Gastrocnemius medialis (tissue), 4 donors: ENCODE measurements at regions of chr6 and their contacts with region 1.

Region 1: GRCh38 chr6:118283766-118284165 is 264.3 kb upstream of the PLN start:
- DNase-seq: peak; percentile 36 to 41
- ATAC-seq: peak; percentile 75 to 84
- H3K4me3 ChIP-seq: peak overlapping the region in 2 of 4 donors; percentile 9 to 31
- H3K27ac ChIP-seq: peak overlapping the region in 1 of 4 donors; percentile 12
- H3K4me1 ChIP-seq: peaks cover 7 to 19% of the 10 kb centered on the region in 2 donors
- H3K27me3 ChIP-seq: no peaks in the 10 kb centered on the region
- CTCF ChIP-seq: peak; percentile 71 to 82 (median 76)
- POLR2A ChIP-seq: no peak

Region 2: DNA sequence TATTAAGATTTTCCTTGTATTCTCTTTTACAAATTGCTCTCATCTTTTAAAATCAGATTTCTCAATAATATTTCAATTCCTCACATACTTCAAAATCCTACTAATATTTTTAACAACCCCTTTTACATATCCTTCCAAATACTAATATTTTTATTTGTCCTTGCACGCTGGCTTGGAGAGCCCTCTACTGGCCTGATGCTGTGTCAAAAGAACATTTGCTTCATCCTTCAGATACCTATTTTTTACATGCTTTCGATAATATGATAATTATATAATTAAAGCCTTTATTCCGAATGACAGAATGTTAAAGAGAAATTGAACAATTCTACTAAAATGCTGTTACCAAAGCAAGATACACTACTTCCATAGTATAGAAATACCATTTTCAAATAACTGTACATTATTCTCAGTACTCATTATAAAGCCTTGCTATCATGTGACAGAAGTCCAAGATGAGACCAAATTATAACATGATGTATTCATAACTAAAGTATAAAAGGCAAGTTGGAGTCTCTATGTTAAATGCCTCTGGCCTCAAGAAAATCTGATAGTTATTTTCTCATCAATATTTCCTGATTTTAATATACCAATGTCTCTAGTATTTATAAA is 225.3 kb after region 1 on chr6:
- in situ Hi-C with region 1: loop called in 3 of 4 experiments (anchors 5 to 25 kb)
- intact Hi-C with region 1: loop called (anchors 1 kb)
- DNase-seq: no peak
- ATAC-seq: no peak
- H3K4me3 ChIP-seq: no peak overlapping the region
- H3K27ac ChIP-seq: peak overlapping the region in 2 of 4 donors; percentile 12 to 75
- H3K4me1 ChIP-seq: peaks cover 57 to 70% of the 10 kb centered on the region in 2 donors
- H3K27me3 ChIP-seq: no peaks in the 10 kb centered on the region
- CTCF ChIP-seq: peak; percentile 44 to 75 (median 59)
- POLR2A ChIP-seq: no peak

Region 3: GRCh38 chr6:118551063-118552053 is 267.6 kb after region 1 on chr6:
- in situ Hi-C with region 1: loop called in 2 of 4 experiments (anchors 10 to 25 kb)
- intact Hi-C with region 1: loop called (anchors 2 kb)
- DNase-seq: no peak
- ATAC-seq: peak; percentile 78 to 81
- H3K4me3 ChIP-seq: peak overlapping the region; percentile 34 to 65 (median 52)
- H3K27ac ChIP-seq: peak overlapping the region; percentile 88 to 95 (median 94)
- H3K4me1 ChIP-seq: peaks cover 58 to 63% of the 10 kb centered on the region in 2 donors
- H3K27me3 ChIP-seq: no peaks in the 10 kb centered on the region
- CTCF ChIP-seq: peak; percentile 56 to 75 (median 72)
- POLR2A ChIP-seq: no peak

Region 4: GRCh38 chr6:118618679-118619377 is 335.1 kb after region 1 on chr6:
- in situ Hi-C with region 1: loop called in 3 of 4 experiments (anchors 5 to 10 kb)
- intact Hi-C with region 1: loop called (anchors 1 kb)
- DNase-seq: peak; percentile 16 to 47
- ATAC-seq: peak; percentile 81 to 85
- H3K4me3 ChIP-seq: no peak overlapping the region
- H3K27ac ChIP-seq: peak overlapping the region in 2 of 4 donors; percentile 45 to 55
- H3K4me1 ChIP-seq: peaks cover 64 to 65% of the 10 kb centered on the region in 2 donors
- H3K27me3 ChIP-seq: no peaks in the 10 kb centered on the region
- CTCF ChIP-seq: peak; percentile 80 to 91 (median 87)
- POLR2A ChIP-seq: no peak

Region 5: GRCh38 chr6:118800394-118801071 is 516.8 kb after region 1 on chr6:
- in situ Hi-C with region 1: loop called in 2 of 4 experiments (anchors 25 kb)
- intact Hi-C with region 1: loop called (anchors 5 kb)
- DNase-seq: peak; percentile 61 to 67
- ATAC-seq: peak; percentile 89 to 95
- H3K4me3 ChIP-seq: no peak overlapping the region
- H3K27ac ChIP-seq: no peak overlapping the region
- H3K4me1 ChIP-seq: peaks cover 8 to 10% of the 10 kb centered on the region in 2 donors
- H3K27me3 ChIP-seq: no peaks in the 10 kb centered on the region
- CTCF ChIP-seq: peak; percentile 57 to 86 (median 77)
- POLR2A ChIP-seq: no peak